Activated CD4-positive, alpha-beta T cell treated with anti-CD3 and anti-CD28 coated beads, Interleukin-2, amount 10 ng/mL, durations not matched to agents 7 days and 5 days (primary cell): ENCODE measurements at regions of chr1 and their contacts with region 1.

Region 1: GRCh38 chr1:160607011-160607671 is 27.8 kb upstream of the CD84 start:
- DNase-seq: peak; percentile 78
- H3K4me3 Mint-ChIP-seq: no peak overlapping the region
- H3K27ac Mint-ChIP-seq: peak overlapping the region; percentile 80
- H3K4me1 Mint-ChIP-seq: peaks cover 56% of the 10 kb centered on the region
- H3K27me3 Mint-ChIP-seq: no peaks in the 10 kb centered on the region

Region 2: GRCh38 chr1:160428655-160429054 is 178.5 kb before region 1 on chr1:
- CTCF ChIA-PET with region 1: interaction called, 15 read pairs
- POLR2A ChIA-PET with region 1: no interaction called
- DNase-seq: peak; percentile 35
- H3K4me3 Mint-ChIP-seq: peak overlapping the region; percentile 13
- H3K27ac Mint-ChIP-seq: peak overlapping the region; percentile 81
- H3K4me1 Mint-ChIP-seq: peaks cover 56% of the 10 kb centered on the region
- H3K27me3 Mint-ChIP-seq: no peaks in the 10 kb centered on the region

Region 3: DNA sequence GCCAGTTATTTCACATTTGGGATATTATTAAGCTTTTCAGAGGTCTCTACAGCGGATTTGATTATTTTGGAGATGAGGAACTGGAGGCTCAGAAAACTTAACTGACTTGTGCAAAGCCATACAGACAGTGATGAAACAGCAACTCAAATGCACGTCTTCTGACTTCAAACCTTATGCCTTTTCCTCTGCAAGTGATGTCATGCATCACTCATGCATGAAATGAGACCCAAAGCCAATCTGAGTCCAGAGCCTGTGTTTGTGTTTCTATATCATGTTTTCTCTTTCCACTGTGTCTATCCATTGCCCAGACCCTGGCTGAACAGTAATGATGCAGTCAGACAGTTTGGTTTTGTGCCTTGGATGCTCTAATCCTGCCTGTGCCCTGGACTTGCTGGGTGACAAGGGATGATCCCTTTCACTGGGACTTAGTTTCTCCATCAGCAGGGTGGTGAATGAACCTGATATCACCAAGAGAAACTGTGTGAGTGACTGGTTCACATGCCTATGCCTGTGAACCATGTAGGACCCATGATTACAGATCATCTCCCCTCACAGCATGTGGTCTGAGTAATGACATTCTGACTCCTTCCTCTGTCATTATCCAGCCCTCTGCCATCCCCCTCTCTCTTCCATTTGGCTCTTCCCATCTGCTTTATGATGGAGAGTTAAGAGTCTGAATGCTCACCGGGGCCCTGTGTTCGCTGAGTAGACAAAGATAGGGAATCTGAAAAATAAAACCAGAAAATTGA is 117.5 kb before region 1 on chr1:
- CTCF ChIA-PET with region 1: no interaction called
- POLR2A ChIA-PET with region 1: no interaction called
- DNase-seq: no peak
- H3K4me3 Mint-ChIP-seq: no peak overlapping the region
- H3K27ac Mint-ChIP-seq: no peak overlapping the region
- H3K4me1 Mint-ChIP-seq: peaks cover 6% of the 10 kb centered on the region
- H3K27me3 Mint-ChIP-seq: no peaks in the 10 kb centered on the region

Region 4: GRCh38 chr1:160590488-160590887 is 16.7 kb before region 1 on chr1:
- CTCF ChIA-PET with region 1: interaction called, 11 read pairs
- POLR2A ChIA-PET with region 1: no interaction called
- DNase-seq: no peak
- H3K4me3 Mint-ChIP-seq: no peak overlapping the region
- H3K27ac Mint-ChIP-seq: no peak overlapping the region
- H3K4me1 Mint-ChIP-seq: peaks cover 4% of the 10 kb centered on the region
- H3K27me3 Mint-ChIP-seq: peaks cover 3% of the 10 kb centered on the region

Region 5: DNA sequence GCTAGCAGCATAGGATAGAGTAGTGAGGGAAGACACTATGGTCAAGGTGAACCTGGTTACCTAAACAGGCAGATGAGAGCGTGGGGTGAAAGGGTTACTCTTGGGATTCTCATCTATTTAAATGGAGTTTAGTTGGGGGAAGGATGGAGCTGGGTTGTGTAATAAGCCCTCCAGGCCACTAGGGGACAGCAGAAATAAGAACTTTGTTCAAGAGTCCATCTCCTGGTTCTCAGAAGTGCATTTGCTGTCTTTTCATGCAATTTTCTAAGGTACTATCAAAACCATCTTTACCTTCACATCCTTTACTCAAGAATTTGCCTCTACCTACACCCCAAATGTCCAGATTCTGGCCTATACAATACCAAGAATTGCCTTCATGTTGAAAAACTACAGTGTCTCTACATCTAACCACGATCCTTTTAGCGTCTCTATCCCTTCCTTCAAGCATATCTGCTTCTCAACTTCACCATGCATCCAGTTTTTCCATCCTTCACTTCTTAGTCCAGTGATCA is 11.7 kb after region 1 on chr1:
- CTCF ChIA-PET with region 1: interaction called, 43 read pairs
- POLR2A ChIA-PET with region 1: no interaction called
- DNase-seq: no peak
- H3K4me3 Mint-ChIP-seq: no peak overlapping the region
- H3K27ac Mint-ChIP-seq: peak overlapping the region; percentile 80
- H3K4me1 Mint-ChIP-seq: peaks cover 72% of the 10 kb centered on the region
- H3K27me3 Mint-ChIP-seq: no peaks in the 10 kb centered on the region

Region 6: DNA sequence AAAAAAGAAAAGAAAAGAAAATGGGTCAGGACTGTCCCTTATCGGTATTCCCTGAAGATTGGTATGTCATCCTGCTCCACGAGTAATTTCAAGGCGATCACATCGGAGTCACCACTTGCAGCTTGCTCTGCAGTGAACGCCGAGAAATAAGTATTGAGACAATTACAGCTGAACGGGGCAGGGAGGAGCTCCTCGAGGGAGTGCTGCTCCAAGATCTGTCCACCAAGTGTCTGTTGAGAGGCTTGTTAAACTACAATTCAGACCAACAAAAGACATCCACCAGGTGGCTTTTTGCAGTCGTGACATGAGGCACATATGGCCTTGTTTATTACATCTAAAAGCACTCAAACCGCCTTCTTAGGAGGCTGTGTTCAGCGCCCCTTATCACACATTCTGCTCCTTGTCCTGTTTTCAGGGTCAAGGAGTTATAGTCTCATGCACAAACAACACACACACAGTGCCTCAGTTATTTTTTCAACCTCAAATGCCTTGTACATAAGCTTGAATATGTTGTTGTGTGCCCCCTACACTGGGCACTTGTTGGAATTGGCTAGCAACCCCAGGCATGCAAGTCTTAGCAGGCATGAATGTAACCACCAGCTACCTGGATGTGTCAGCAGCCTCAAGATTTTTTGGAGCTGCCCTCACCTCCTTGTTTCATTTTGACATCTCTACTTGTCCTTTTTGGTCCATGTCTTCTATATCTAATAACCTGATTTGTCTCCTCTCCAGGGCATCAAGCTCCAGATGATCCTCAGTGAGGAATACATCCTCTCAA is 117.5 kb after region 1 on chr1:
- CTCF ChIA-PET with region 1: no interaction called
- POLR2A ChIA-PET with region 1: no interaction called
- DNase-seq: peak; percentile 35
- H3K4me3 Mint-ChIP-seq: no peak overlapping the region
- H3K27ac Mint-ChIP-seq: peak overlapping the region; percentile 10
- H3K4me1 Mint-ChIP-seq: peaks cover 31% of the 10 kb centered on the region
- H3K27me3 Mint-ChIP-seq: no peaks in the 10 kb centered on the region